ENCODE measurements at regions of chr1 and their contacts with region 1.

Region 1: GRCh38 chr1:89632657-89633247 is at the start of gene LRRC8C:
- DNase-seq: peak; percentile 47 to 90
- H3K4me3 ChIP-seq: peak within 1 kb of the TSS; percentile 89 to 98
- H3K27ac ChIP-seq: peak within 1 kb of the TSS; percentile 89 to 95
- H3K4me1 ChIP-seq: no peaks in the 10 kb centered on the region
- H3K27me3 ChIP-seq: no peaks in the 10 kb centered on the region
- CTCF ChIP-seq: peak; percentile 4 to 88 (median 18)
- total RNA-seq, gene LRRC8C: 7.5 TPM

Region 2: GRCh38 chr1:89524369-89525168 is 108.2 kb before region 1 on chr1 and contains the start of gene LRRC8B:
- intact Hi-C with region 1: loop called (anchors 1 kb)
- DNase-seq: peak; percentile 49 to 92
- H3K4me3 ChIP-seq: peak within 1 kb of the TSS; percentile 94 to 99
- H3K27ac ChIP-seq: peak within 1 kb of the TSS; percentile 53 to 74
- H3K4me1 ChIP-seq: peaks cover 0 to 6% of the 10 kb centered on the region in 2 donors
- H3K27me3 ChIP-seq: no peaks in the 10 kb centered on the region
- CTCF ChIP-seq: peak in 1 of 3 experiments; percentile 8
- total RNA-seq, gene LRRC8B: 4.2 TPM

Region 3: DNA sequence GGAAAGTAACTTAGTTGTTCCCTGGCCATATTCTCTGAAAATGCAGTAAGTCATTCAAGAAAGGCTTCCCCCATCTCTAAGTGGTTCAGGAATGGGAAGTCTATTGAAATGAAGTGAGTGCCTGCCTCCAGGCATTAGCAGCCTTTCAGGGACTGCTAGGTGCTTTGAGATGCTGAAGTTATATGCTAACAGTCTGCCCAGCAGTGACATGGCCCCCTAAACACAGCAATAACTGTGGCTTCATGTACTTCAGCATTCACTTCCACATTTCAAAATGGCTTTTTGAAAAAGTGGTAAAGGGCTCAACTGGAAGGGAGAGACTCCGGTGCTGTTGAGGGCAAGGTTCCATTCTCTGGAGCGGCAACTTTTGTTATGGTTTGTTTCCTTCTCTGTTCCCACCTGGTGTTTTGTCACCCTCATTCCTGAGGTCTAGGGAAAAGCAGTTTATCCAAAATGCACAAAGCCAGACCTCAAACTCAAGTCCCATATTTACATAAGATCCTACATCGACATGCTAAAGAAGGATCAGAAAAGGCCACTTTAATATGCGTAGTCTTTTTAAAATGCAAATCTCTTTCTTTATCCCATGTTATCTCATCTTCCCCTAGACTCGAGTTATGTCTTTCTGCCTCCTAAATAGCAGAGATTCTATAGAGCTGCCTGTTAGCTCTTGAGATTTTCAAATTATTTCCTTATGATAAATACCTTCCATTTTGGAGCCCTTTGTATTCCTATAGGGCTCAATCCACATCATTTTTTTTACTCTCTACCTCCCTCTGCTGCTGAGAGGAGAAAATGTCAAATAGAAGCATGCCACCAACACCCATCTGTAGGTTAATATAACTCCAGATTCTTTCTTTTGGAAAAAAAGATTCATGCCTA is 34.1 kb before region 1 on chr1:
- intact Hi-C with region 1: no loop called
- DNase-seq: no peak
- H3K4me3 ChIP-seq: no peak overlapping the region
- H3K27ac ChIP-seq: no peak overlapping the region
- H3K4me1 ChIP-seq: no peaks in the 10 kb centered on the region
- H3K27me3 ChIP-seq: no peaks in the 10 kb centered on the region
- CTCF ChIP-seq: peak; percentile 42 to 62 (median 43)

Region 4: DNA sequence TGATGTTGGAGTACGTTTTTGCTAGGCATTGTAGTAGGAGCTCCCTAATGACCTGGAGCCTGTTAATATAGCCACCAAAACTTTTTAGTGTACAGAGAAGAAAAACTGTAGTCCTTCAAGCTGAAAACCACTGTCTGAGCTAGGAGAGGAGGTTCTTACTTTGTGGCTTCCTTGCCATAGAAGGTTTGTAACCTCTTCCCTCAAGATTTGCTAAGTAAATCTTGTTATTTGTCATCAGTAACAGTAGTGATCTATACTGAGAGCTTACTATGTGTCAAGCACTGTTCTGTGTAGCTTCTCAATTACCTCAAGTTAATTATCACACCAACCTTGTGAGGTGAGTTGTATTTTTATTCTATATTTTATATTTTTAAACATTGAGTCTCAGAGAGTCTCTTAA is 21.0 kb before region 1 on chr1:
- intact Hi-C with region 1: no loop called
- DNase-seq: no peak
- H3K4me3 ChIP-seq: no peak overlapping the region
- H3K27ac ChIP-seq: no peak overlapping the region
- H3K4me1 ChIP-seq: no peaks in the 10 kb centered on the region
- H3K27me3 ChIP-seq: no peaks in the 10 kb centered on the region
- CTCF ChIP-seq: no peak